Mammary epithelial cell (primary cell): ENCODE measurements at regions of chr4 and their contacts with region 1.

Region 1: DNA sequence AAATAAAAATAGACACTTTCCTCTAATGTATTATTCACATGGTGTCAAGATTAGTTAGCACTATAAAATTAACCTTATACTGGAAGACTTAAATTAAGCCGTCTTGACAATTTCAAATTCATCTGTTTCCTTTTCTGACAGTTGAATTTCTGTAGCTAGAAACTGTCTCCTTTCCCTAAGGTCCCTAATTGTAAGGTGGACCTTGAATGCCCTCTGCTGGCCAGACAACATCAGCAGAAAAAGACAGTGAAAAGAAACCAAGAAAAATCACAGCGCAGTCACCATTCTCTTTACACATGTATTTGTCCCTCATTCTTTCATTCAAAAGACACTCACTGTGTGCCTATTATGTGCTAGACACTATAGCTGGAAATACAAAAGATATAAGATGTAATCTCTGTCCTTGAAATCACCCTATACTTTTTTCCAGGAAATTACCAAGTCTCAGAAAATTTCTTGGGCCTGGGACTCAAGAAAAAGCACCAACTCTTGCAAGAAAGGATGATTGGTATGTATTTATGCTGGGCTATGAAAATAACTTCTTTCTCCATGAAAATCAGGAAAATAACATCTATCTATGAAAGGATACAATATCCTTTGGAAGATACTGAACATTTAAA is 32.7 kb upstream of the AMBN start:
- DNase-seq: peak; percentile 34
- H3K4me3 ChIP-seq: no peak overlapping the region
- H3K27ac ChIP-seq: no peak overlapping the region
- H3K4me1 ChIP-seq: no peaks in the 10 kb centered on the region
- H3K27me3 ChIP-seq: no peaks in the 10 kb centered on the region
- CTCF ChIP-seq: peak; percentile 82 to 84

Region 2: GRCh38 chr4:69823481-69824186 is 735.7 kb before region 1 on chr4:
- CTCF ChIA-PET with region 1: no interaction called
- dilution Hi-C with region 1: no loop called
- in situ Hi-C with region 1: no loop called
- intact Hi-C with region 1: loop called (anchors 5 kb)
- DNase-seq: peak; percentile 34
- H3K4me3 ChIP-seq: no peak overlapping the region
- H3K27ac ChIP-seq: no peak overlapping the region
- H3K4me1 ChIP-seq: no peaks in the 10 kb centered on the region
- H3K27me3 ChIP-seq: no peaks in the 10 kb centered on the region
- CTCF ChIP-seq: peak; percentile 76 to 88

Region 3: DNA sequence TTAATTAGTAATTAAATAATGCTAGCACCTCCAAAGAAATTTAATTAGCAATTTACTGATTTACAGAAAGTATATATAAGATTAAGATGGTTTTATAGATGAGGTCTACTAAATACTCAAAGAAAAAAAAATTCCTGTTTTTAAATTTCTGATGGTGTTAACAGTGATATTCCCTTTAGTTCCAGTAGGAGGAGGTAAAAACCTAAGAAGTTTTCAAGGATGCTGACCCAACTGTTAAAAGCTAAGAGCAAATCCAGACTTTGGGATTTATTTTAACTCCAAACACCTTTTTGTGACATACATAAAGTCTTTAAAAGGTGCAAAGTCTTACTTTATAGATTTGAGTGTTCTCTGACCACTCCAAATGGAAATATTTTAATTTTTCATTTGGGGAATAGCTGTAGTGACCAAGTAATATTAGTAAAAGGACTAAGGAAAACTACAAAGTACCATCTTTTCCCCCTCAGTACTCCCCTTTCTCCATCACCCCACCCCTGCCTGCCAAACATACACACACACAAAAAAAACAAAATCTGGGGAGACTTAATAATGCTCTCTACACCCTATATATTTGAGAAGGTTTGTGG is 662.7 kb before region 1 on chr4:
- CTCF ChIA-PET with region 1: no interaction called
- dilution Hi-C with region 1: no loop called
- in situ Hi-C with region 1: no loop called
- intact Hi-C with region 1: loop called (anchors 2 kb)
- DNase-seq: no peak
- H3K4me3 ChIP-seq: no peak overlapping the region
- H3K27ac ChIP-seq: no peak overlapping the region
- H3K4me1 ChIP-seq: no peaks in the 10 kb centered on the region
- H3K27me3 ChIP-seq: peaks cover 2% of the 10 kb centered on the region
- CTCF ChIP-seq: peak; percentile 44 to 60

Region 4: GRCh38 chr4:70183168-70183939 is 376.0 kb before region 1 on chr4:
- CTCF ChIA-PET with region 1: no interaction called
- dilution Hi-C with region 1: no loop called
- in situ Hi-C with region 1: no loop called
- intact Hi-C with region 1: loop called (anchors 5 kb)
- DNase-seq: peak; percentile 10
- H3K4me3 ChIP-seq: no peak overlapping the region
- H3K27ac ChIP-seq: no peak overlapping the region
- H3K4me1 ChIP-seq: no peaks in the 10 kb centered on the region
- H3K27me3 ChIP-seq: peaks cover 4% of the 10 kb centered on the region
- CTCF ChIP-seq: peak; percentile 83 to 84